Mammary epithelial cell (primary cell): ENCODE measurements at regions of chr16 and their contacts with region 1.

Region 1: GRCh38 chr16:28277537-28278388 is 14.6 kb upstream of the SBK1 start:
- DNase-seq: peak; percentile 54
- H3K4me3 ChIP-seq: peak overlapping the region; percentile 38 to 48 (median 47)
- H3K27ac ChIP-seq: no peak overlapping the region
- H3K4me1 ChIP-seq: peaks cover 4% of the 10 kb centered on the region
- H3K27me3 ChIP-seq: no peaks in the 10 kb centered on the region
- CTCF ChIP-seq: peak; percentile 77 to 92

Region 2: GRCh38 chr16:28205117-28205899 is 72.5 kb before region 1 on chr16:
- CTCF ChIA-PET with region 1: no interaction called
- dilution Hi-C with region 1: loop called (anchors 5 kb)
- in situ Hi-C with region 1: no loop called
- intact Hi-C with region 1: no loop called
- DNase-seq: no peak
- H3K4me3 ChIP-seq: no peak overlapping the region
- H3K27ac ChIP-seq: no peak overlapping the region
- H3K4me1 ChIP-seq: peaks cover 13% of the 10 kb centered on the region
- H3K27me3 ChIP-seq: no peaks in the 10 kb centered on the region
- CTCF ChIP-seq: no peak

Region 3: GRCh38 chr16:28237754-28238357 is 39.9 kb before region 1 on chr16:
- CTCF ChIA-PET with region 1: no interaction called
- dilution Hi-C with region 1: loop called (anchors 5 kb)
- in situ Hi-C with region 1: no loop called
- intact Hi-C with region 1: no loop called
- DNase-seq: no peak
- H3K4me3 ChIP-seq: no peak overlapping the region
- H3K27ac ChIP-seq: no peak overlapping the region
- H3K4me1 ChIP-seq: no peaks in the 10 kb centered on the region
- H3K27me3 ChIP-seq: no peaks in the 10 kb centered on the region
- CTCF ChIP-seq: no peak

Region 4: DNA sequence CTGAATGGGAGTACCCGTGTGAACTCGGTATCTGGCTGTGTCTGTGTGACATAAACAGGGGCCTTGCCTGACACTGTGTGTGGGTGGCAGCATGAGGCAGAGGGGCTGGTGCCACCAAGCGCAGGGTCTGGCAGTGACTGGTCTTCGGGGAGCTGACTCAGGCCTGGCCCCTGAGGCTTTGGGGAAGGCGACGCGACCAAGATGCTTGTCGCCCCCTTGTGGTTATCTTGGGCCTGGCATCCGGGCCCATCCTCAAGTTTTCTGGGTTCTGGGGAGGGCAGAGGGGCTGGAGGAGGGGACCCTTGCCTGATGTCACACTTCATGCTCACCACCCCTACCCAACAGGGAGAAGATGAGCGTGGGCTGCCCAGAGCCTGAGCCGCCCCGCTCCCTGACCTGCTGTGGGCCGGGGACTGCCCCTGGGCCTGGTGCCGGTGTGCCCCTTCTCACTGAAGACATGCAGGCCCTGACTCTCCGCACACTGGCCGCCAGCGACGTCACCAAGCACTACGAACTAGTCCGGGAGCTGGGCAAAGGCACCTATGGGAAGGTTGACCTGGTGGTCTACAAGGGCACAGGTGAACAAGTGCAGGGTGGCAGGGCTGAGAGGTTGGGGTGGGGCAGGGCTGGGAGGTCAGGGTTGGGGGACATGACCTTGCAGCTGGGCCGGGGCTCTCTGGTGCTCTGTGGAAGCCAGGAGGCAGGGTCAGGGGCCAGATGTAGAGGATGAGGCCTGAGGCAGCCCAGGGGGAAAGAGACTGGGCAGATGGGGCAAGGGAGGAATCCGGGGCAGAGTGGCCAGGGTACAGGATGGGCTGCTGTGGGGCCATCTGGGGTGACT is 39.5 kb after region 1 on chr16:
- CTCF ChIA-PET with region 1: no interaction called
- dilution Hi-C with region 1: no loop called
- in situ Hi-C with region 1: loop called in 1 of 2 experiments (anchors 5 kb)
- intact Hi-C with region 1: loop called (anchors 1 kb)
- DNase-seq: peak; percentile 17
- H3K4me3 ChIP-seq: no peak overlapping the region
- H3K27ac ChIP-seq: no peak overlapping the region
- H3K4me1 ChIP-seq: peaks cover 10% of the 10 kb centered on the region
- H3K27me3 ChIP-seq: no peaks in the 10 kb centered on the region
- CTCF ChIP-seq: peak; percentile 66 to 94

Region 5: GRCh38 chr16:28538733-28539596 is 261.2 kb after region 1 on chr16 and contains the start of gene NUPR1:
- CTCF ChIA-PET with region 1: interaction called, 14 read pairs
- dilution Hi-C with region 1: no loop called
- in situ Hi-C with region 1: loop called in 1 of 2 experiments (anchors 25 kb)
- intact Hi-C with region 1: no loop called
- DNase-seq: peak; percentile 87
- H3K4me3 ChIP-seq: peak within 1 kb of the TSS; percentile 60 to 77 (median 60)
- H3K27ac ChIP-seq: peak within 1 kb of the TSS; percentile 65
- H3K4me1 ChIP-seq: peaks cover 18% of the 10 kb centered on the region
- H3K27me3 ChIP-seq: no peaks in the 10 kb centered on the region
- CTCF ChIP-seq: no peak
- total RNA-seq, gene NUPR1: 55.0 to 160 TPM

Region 6: DNA sequence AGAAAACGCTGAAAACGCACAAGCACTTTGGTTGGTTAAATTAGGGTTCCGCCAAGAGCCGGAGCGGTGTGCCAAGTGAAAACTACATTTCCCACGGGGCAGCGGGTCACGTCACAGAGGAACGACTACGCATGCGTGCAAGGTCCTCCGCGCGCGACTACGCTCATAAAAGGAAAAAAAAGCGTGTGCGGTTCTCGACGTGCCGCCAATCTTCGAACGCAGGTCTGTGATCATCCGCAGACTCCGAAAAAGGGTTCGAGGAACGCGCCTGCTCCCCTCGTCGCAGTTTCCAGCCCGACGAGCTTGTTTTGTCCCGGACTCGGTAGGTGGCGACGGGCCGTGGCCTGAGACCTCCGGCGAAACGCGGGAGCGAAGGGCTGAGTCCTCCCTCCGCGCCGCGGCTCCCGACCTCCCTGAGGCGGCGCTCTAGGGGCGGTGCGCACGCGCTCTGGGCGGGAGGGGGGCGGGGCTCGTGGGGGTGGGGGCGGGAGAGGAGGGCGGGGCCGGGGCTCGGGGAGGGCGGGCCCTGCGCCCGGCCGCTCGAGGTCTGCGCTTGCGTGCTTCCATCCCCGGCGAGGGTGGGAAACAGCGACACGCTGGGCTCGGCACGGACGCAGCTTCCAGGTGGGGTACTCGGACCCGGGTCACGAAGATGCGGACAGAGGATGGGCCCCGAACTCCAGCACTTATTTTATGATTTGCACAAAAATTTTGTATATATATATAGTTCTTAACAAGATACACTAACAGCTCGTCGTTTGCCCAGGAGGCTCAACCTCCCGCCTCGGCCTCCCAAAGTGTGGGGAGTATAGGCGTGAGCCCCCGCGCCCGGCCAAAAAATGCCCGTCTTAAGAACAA is 276.2 kb after region 1 on chr16 and contains the start of gene SGF29:
- CTCF ChIA-PET with region 1: no interaction called
- dilution Hi-C with region 1: no loop called
- in situ Hi-C with region 1: loop called in 1 of 2 experiments (anchors 25 kb)
- intact Hi-C with region 1: loop called (anchors 1 kb)
- DNase-seq: peak; percentile 86
- H3K4me3 ChIP-seq: peak within 1 kb of the TSS; percentile 45 to 91 (median 69)
- H3K27ac ChIP-seq: peak within 1 kb of the TSS; percentile 66
- H3K4me1 ChIP-seq: peaks cover 7% of the 10 kb centered on the region
- H3K27me3 ChIP-seq: no peaks in the 10 kb centered on the region
- CTCF ChIP-seq: peak in 1 of 2 donors; percentile 33
- total RNA-seq, gene SGF29: 12.7 to 17.7 TPM

Region 7: DNA sequence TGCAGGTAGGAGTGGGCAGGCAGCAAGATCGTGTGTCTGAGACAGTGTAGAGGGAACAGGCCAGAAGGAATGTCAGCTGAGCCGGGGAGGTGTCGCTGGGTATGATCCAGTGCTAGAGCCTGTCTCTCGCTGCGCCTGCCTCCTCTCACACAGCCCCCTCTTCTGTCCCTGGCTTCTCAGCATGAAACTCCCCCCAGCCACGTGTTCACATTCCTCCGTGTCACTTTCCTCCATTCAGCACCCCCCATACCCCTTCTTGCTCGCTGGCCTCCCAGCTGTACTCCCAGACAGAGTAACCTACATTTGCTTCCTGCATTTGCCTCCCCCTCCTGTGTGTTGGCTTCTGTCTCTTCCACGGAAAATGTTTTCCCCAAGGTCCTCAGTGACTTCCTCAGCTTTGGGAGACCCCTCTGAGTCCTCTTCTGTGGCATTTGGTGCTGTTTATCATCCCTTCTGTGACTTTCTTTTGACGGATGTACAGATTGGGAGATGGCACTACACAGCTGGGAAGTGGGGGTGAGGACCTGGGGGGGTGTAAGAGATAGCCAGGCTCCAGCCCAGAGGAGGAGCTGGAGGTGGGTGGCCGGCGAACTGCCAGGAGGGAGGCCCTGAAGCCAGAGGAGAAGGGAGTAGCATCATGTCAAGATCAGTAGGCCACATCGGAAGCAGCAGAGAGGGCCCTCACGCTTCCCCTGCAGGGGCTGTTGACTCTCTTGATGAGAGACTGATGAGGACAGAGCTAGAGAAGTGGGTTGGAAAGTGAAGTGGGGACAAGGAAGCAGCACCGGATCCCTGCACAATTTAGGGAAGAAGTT is 295.1 kb after region 1 on chr16:
- CTCF ChIA-PET with region 1: no interaction called
- dilution Hi-C with region 1: no loop called
- in situ Hi-C with region 1: no loop called
- intact Hi-C with region 1: no loop called
- DNase-seq: no peak
- H3K4me3 ChIP-seq: no peak overlapping the region
- H3K27ac ChIP-seq: no peak overlapping the region
- H3K4me1 ChIP-seq: no peaks in the 10 kb centered on the region
- H3K27me3 ChIP-seq: no peaks in the 10 kb centered on the region
- CTCF ChIP-seq: no peak

Region 8: DNA sequence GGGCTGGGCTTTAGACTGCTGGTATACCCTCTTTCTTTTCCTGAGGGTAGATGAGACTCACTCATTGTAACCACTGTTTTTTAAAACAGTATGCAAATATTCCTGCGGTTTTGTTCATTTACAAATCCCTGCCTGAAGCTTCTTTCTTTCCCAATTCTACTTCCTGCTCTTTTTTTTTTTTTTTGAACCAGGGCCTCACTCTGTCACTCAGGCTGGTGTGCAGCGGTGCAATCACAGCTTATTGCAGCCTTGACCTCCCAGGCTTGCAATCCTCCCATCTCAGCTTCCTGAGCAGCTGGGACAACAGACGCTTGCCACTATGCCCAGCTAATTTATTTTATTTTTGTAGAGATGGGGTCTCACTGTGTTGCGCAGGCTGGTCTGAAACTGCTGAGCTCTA is 340.1 kb after region 1 on chr16:
- CTCF ChIA-PET with region 1: no interaction called
- dilution Hi-C with region 1: no loop called
- in situ Hi-C with region 1: no loop called
- intact Hi-C with region 1: loop called (anchors 5 kb)
- DNase-seq: no peak
- H3K4me3 ChIP-seq: no peak overlapping the region
- H3K27ac ChIP-seq: no peak overlapping the region
- H3K4me1 ChIP-seq: peaks cover 3% of the 10 kb centered on the region
- H3K27me3 ChIP-seq: no peaks in the 10 kb centered on the region
- CTCF ChIP-seq: no peak